ENCODE measurements at regions of chr4 and their contacts with region 1.

Region 1: GRCh38 chr4:48578132-48578968 is 88.3 kb downstream of the ZAR1 start:
- DNase-seq: peak; percentile 63
- ATAC-seq: peak; percentile 78
- H3K4me3 Mint-ChIP-seq: no peak overlapping the region
- H3K27ac Mint-ChIP-seq: no peak overlapping the region
- H3K4me1 Mint-ChIP-seq: peaks cover 4% of the 10 kb centered on the region
- H3K27me3 Mint-ChIP-seq: no peaks in the 10 kb centered on the region

Region 2: DNA sequence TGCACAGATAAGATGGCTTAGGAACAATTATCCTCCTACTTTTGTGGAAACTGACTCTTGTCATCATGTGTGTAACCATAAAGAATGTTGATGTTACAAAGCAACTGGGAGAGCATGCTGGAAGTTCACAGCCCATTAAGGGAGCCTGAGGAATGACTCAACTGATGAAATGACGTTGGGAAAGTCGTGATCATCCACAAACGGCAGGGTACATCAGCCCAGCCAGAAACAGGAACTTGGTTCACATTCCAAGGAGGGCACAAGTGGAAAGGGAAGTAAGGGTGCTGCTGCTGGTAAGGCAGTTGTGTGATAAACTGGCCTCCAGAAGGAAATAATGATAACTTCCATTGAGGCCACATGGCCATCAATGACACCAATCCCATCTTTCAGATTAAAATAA is 315.4 kb before region 1 on chr4:
- CTCF ChIA-PET with region 1: no interaction called
- POLR2A ChIA-PET with region 1: interaction called, 12 read pairs
- intact Hi-C with region 1: no loop called
- DNase-seq: no peak
- ATAC-seq: no peak
- H3K4me3 Mint-ChIP-seq: no peak overlapping the region
- H3K27ac Mint-ChIP-seq: no peak overlapping the region
- H3K4me1 Mint-ChIP-seq: peaks cover 7% of the 10 kb centered on the region
- H3K27me3 Mint-ChIP-seq: no peaks in the 10 kb centered on the region

Region 3: GRCh38 chr4:48462363-48462762 is 116.0 kb before region 1 on chr4:
- CTCF ChIA-PET with region 1: no interaction called
- POLR2A ChIA-PET with region 1: no interaction called
- intact Hi-C with region 1: no loop called
- DNase-seq: no peak
- ATAC-seq: no peak
- H3K4me3 Mint-ChIP-seq: no peak overlapping the region
- H3K27ac Mint-ChIP-seq: no peak overlapping the region
- H3K4me1 Mint-ChIP-seq: no peaks in the 10 kb centered on the region
- H3K27me3 Mint-ChIP-seq: no peaks in the 10 kb centered on the region

Region 4: DNA sequence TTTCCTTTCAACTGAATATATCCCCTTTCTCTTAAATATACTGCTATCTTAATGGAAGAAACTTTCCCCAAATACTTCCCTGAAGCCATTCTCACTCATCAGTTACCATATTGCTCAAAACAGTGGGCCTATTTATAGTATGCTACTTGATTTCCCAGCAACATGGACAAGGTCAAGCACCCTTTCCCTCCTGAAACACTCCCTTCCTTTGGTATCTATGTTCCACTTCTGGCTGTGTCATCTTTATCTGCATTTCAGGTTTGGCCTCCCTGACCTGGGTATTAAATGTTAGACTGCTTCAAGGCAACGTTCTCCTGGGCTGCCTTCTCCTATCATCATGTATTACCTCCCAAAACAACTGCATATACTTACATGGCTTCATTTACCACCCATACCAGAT is 13.0 kb after region 1 on chr4:
- CTCF ChIA-PET with region 1: interaction called, 14 read pairs
- POLR2A ChIA-PET with region 1: no interaction called
- intact Hi-C with region 1: no loop called
- DNase-seq: no peak
- ATAC-seq: no peak
- H3K4me3 Mint-ChIP-seq: no peak overlapping the region
- H3K27ac Mint-ChIP-seq: peak overlapping the region; percentile 1
- H3K4me1 Mint-ChIP-seq: peaks cover 12% of the 10 kb centered on the region
- H3K27me3 Mint-ChIP-seq: no peaks in the 10 kb centered on the region

Region 5: DNA sequence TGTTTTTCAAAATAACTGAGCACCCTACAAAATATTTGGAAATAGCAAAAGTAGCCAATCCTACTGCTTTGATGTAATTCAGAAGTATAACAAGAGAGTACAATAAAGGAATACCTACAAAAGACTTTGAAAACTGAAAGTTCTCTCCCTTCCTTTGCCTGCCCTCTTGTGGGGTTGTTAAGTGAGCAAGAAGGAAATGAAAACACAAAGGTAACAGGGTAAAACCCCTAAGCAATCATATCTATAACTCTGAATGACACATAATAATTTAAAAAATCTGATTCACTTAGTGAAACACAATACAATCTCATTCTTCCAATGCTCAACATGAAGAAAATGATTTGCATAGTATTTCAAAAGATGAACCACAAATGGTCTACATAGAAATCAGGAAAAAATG is 103.5 kb after region 1 on chr4:
- CTCF ChIA-PET with region 1: interaction called, 19 read pairs
- POLR2A ChIA-PET with region 1: no interaction called
- intact Hi-C with region 1: loop called (anchors 1 kb)
- DNase-seq: peak; percentile 23
- ATAC-seq: peak; percentile 98
- H3K4me3 Mint-ChIP-seq: no peak overlapping the region
- H3K27ac Mint-ChIP-seq: no peak overlapping the region
- H3K4me1 Mint-ChIP-seq: peaks cover 42% of the 10 kb centered on the region
- H3K27me3 Mint-ChIP-seq: no peaks in the 10 kb centered on the region

Region 6: DNA sequence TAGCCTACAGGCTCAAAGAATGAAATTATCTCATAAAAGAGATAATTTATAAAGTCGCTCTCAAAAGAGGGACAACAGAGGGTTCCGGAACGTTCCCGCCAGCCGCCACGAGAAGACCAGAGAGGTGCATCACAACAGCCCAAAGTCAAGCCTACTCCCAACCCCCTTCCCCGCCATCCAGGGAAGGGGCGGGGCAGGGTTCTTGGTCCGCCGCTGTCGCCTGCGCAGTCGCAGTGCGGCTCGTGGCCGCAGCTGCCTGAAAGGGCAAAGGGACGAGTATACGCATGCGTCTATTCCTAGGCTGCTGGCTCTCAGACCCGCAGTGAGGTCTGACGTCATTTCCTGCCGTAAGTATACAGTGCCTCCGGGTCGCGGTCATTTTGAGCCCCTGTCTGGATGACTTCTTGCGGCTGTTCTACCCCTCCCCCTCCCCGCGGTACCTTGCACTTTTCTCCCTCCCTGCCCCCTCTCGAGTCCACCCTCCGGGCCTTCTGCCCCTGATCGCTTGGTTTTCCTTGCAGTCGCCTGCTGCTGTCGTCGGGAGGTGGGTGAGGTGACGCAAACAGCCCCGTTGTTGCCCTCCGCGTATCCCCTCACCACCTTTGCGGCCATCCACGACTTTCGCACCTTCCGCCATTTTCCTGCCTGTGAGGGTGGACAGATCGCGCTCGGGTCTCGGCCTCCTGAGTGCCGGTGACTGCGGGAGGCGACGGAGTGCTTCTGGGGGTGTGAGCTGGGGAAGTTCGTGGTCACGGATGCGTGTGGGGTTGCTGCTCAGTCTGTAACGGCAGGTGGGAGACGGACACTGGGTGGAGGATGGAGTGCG is 252.6 kb after region 1 on chr4 and contains the start of gene OCIAD1:
- CTCF ChIA-PET with region 1: no interaction called
- POLR2A ChIA-PET with region 1: no interaction called
- intact Hi-C with region 1: loop called in 1 of 2 experiments (anchors 5 kb)
- DNase-seq: peak; percentile 96
- ATAC-seq: peak; percentile 99
- H3K4me3 Mint-ChIP-seq: peak within 1 kb of the TSS; percentile 100
- H3K27ac Mint-ChIP-seq: peak within 1 kb of the TSS; percentile 100
- H3K4me1 Mint-ChIP-seq: peaks cover 23% of the 10 kb centered on the region
- H3K27me3 Mint-ChIP-seq: no peaks in the 10 kb centered on the region
- total RNA-seq, gene OCIAD1: 113 to 162 TPM

Region 7: GRCh38 chr4:48844843-48845242 is 266.5 kb after region 1 on chr4:
- CTCF ChIA-PET with region 1: interaction called, 3 read pairs
- POLR2A ChIA-PET with region 1: no interaction called
- intact Hi-C with region 1: loop called in 1 of 2 experiments (anchors 5 kb)
- DNase-seq: no peak
- ATAC-seq: no peak
- H3K4me3 Mint-ChIP-seq: no peak overlapping the region
- H3K27ac Mint-ChIP-seq: no peak overlapping the region
- H3K4me1 Mint-ChIP-seq: peaks cover 6% of the 10 kb centered on the region
- H3K27me3 Mint-ChIP-seq: no peaks in the 10 kb centered on the region

Region 8: GRCh38 chr4:48944756-48945241 is 366.4 kb after region 1 on chr4:
- CTCF ChIA-PET with region 1: interaction called, 11 read pairs
- POLR2A ChIA-PET with region 1: no interaction called
- intact Hi-C with region 1: no loop called
- DNase-seq: peak; percentile 80
- ATAC-seq: peak; percentile 77
- H3K4me3 Mint-ChIP-seq: no peak overlapping the region
- H3K27ac Mint-ChIP-seq: no peak overlapping the region
- H3K4me1 Mint-ChIP-seq: peaks cover 14% of the 10 kb centered on the region
- H3K27me3 Mint-ChIP-seq: no peaks in the 10 kb centered on the region

Region 9: DNA sequence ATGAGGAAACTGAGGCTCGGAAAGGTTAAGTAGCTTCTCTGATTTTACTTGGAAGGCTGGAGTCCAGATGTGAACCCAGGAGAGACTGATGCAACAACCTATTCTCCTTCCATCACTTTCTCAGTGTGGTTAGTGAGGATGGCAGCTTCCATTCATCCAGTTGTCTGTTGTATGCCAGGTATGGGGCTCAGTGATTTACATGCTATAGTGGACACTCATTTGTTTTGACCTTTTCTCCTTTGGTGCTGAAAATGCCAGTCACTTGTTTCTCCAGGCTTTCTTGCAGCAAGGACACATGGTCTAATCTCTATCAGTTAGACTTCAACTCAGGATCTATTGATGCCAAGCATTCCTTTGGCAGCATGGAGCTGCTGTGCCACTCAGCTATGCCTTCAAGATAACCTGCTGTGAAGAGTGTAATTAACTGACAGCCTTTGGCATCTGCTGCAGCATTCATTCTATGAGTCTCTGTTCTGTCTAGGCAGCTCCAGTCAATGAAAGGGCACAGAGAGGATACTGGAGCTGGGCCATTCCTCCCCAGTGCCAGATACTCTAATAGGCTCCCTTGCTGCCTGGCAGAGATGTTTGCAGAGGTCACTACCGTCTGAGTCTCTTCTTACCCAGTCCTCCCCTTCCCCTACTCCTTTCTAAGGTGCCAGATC is 396.8 kb after region 1 on chr4:
- CTCF ChIA-PET with region 1: no interaction called
- POLR2A ChIA-PET with region 1: no interaction called
- intact Hi-C with region 1: no loop called
- DNase-seq: no peak
- ATAC-seq: no peak
- H3K4me3 Mint-ChIP-seq: no peak overlapping the region
- H3K27ac Mint-ChIP-seq: no peak overlapping the region
- H3K4me1 Mint-ChIP-seq: peaks cover 3% of the 10 kb centered on the region
- H3K27me3 Mint-ChIP-seq: peaks cover 14% of the 10 kb centered on the region

Measured in activated CD4-positive, alpha-beta T cell treated with anti-CD3 and anti-CD28 coated beads for 36 hours (primary cell).